Activated T-helper 2 cell treated with anti-CD3 and anti-CD28 coated beads, Interferon-gamma antibody, Interleukin-2, Interleukin-4, amounts not matched to agents 10 μg/mL and 5 μg/mL and 100 μg/mL, durations not matched to agents 14 hours and 24 hours and 36 hours (primary cell): ENCODE measurements at regions of chr4 and their contacts with region 1.

Region 1: GRCh38 chr4:125928652-125929051 is 613.9 kb downstream of the FAT4 start:
- DNase-seq: no peak
- H3K4me3 Mint-ChIP-seq: no peak overlapping the region
- H3K27ac Mint-ChIP-seq: no peak overlapping the region
- H3K4me1 Mint-ChIP-seq: no peaks in the 10 kb centered on the region
- H3K27me3 Mint-ChIP-seq: no peaks in the 10 kb centered on the region

Region 2: GRCh38 chr4:125389713-125390112 is 538.9 kb before region 1 on chr4:
- intact Hi-C with region 1: loop called (anchors 10 kb)
- DNase-seq: no peak
- H3K4me3 Mint-ChIP-seq: no peak overlapping the region
- H3K27ac Mint-ChIP-seq: no peak overlapping the region
- H3K4me1 Mint-ChIP-seq: no peaks in the 10 kb centered on the region
- H3K27me3 Mint-ChIP-seq: no peaks in the 10 kb centered on the region

Region 3: GRCh38 chr4:125801373-125801772 is 127.3 kb before region 1 on chr4:
- intact Hi-C with region 1: no loop called
- DNase-seq: no peak
- H3K4me3 Mint-ChIP-seq: no peak overlapping the region
- H3K27ac Mint-ChIP-seq: no peak overlapping the region
- H3K4me1 Mint-ChIP-seq: no peaks in the 10 kb centered on the region
- H3K27me3 Mint-ChIP-seq: no peaks in the 10 kb centered on the region